PC-9 (cell line): ENCODE measurements at regions of chr11 and their contacts with region 1.

Region 1: GRCh38 chr11:41612415-41612814 is 153.0 kb upstream of the LRRC4C start:
- DNase-seq: no peak
- H3K4me3 ChIP-seq: no peak overlapping the region
- H3K27ac ChIP-seq: no peak overlapping the region
- H3K4me1 ChIP-seq: no peaks in the 10 kb centered on the region
- H3K27me3 ChIP-seq: no peaks in the 10 kb centered on the region
- CTCF ChIP-seq: no peak; the same call in 1 of the 2 replicates

Region 2: GRCh38 chr11:40139066-40139465 is 1473.3 kb before region 1 on chr11:
- CTCF ChIA-PET with region 1: no interaction called
- POLR2A ChIA-PET with region 1: interaction called, 13 read pairs
- intact Hi-C with region 1: no loop called
- DNase-seq: no peak
- H3K4me3 ChIP-seq: no peak overlapping the region
- H3K27ac ChIP-seq: no peak overlapping the region
- H3K4me1 ChIP-seq: no peaks in the 10 kb centered on the region
- H3K27me3 ChIP-seq: no peaks in the 10 kb centered on the region
- CTCF ChIP-seq: no peak

Region 3: GRCh38 chr11:41895081-41895480 is 282.7 kb after region 1 on chr11:
- CTCF ChIA-PET with region 1: no interaction called
- POLR2A ChIA-PET with region 1: no interaction called
- intact Hi-C with region 1: no loop called
- DNase-seq: no peak
- H3K4me3 ChIP-seq: no peak overlapping the region
- H3K27ac ChIP-seq: no peak overlapping the region
- H3K4me1 ChIP-seq: no peaks in the 10 kb centered on the region
- H3K27me3 ChIP-seq: no peaks in the 10 kb centered on the region
- CTCF ChIP-seq: no peak